IMR-90 (cell line): ENCODE measurements at regions of chr4 and their contacts with region 1.

Region 1: DNA sequence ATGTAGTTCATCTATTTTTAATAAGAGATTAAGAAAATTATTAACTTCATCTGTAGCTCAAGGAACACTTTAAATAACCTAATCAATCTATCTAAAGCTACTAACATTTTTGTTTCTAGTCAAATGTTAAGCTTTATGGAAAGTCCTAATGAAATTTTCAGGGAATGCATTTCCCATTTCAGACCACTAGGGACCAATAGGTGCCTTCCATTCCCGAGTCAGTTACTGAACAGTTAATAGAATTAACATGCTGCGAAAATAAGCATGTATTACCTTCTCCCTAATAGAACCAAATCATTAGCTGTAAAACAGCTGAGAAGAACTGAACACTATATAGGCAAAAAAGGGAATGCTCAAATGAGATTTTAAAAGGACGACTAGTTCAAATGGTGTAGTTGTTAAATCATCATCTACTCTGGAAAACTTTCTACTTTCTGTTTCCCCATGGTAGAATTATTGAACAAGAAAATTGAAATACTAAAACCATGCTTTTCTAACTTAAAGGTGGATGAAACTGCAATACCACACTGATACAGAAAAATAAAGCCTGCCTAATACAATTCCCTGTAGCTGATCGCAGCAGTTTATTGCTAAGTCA is 22.5 kb downstream of the STX18 start:
- DNase-seq: peak; percentile 33
- ATAC-seq: peak; percentile 72; the same call in 1 of the 2 replicates
- H3K4me3 ChIP-seq: no peak overlapping the region
- H3K27ac ChIP-seq: no peak overlapping the region
- H3K4me1 ChIP-seq: no peaks in the 10 kb centered on the region
- H3K27me3 ChIP-seq: no peaks in the 10 kb centered on the region
- CTCF ChIP-seq: peak; percentile 59
- POLR2A ChIP-seq: no peak
- RAD21 ChIP-seq: peak; percentile 51

Region 2: GRCh38 chr4:4541661-4542570 is 22.5 kb after region 1 on chr4 and contains the start of gene STX18:
- CTCF ChIA-PET with region 1: interaction called, 12 read pairs
- POLR2A ChIA-PET with region 1: no interaction called
- dilution Hi-C with region 1: no loop called
- in situ Hi-C with region 1: no loop called
- intact Hi-C with region 1: no loop called
- DNase-seq: peak; percentile 83
- ATAC-seq: peak; percentile 99
- H3K4me3 ChIP-seq: peak within 1 kb of the TSS; percentile 66
- H3K27ac ChIP-seq: peak within 1 kb of the TSS; percentile 74
- H3K4me1 ChIP-seq: no peaks in the 10 kb centered on the region
- H3K27me3 ChIP-seq: no peaks in the 10 kb centered on the region
- CTCF ChIP-seq: no peak
- POLR2A ChIP-seq: peak; percentile 84
- RAD21 ChIP-seq: peak; percentile 38
- total RNA-seq, gene STX18: 20.1 and 26.9 TPM in 2 replicates

Region 3: DNA sequence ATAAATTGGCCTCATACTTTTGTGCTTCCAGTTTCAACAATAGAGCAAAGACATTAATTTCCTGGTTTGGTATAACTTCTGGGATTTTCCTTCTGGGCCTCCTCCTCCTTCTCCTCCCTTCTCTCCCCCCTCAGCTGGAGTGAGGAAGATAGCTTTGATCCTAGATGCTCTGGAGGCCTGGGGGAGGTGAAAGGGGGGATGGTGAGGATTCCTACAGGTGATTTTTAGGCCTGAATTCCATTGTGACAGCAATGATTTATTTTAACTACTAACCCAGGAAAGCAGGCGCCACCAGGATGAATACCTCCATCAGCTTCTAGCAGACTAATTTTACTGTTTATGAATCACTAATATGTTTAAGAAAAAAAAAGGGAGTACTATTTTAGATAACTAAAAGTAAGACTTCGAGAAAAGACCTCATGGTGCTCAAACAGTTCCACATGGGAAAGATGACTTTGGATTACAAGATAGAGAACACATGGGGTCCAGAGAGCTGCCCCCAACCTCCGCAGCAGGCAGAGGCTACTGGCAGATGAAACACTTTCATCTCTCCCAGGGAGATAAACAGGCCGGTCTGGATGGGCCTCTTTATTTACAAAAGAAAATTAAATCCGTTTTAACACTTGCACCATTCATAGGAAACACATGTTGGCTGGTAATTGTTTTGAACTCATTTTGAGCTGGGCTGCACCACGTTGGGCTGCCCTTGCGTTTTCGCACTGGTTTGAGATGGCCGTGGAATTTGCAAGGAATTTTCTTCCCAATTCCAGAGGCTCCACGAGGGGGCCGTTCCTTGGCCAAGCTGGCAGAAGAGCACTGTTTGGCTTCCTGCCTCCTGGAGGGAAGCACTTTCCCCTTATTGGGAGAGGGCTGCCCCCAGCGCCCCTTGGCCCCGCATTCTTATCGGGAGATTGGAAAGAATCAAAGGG is 147.6 kb after region 1 on chr4:
- CTCF ChIA-PET with region 1: interaction called, 15 read pairs
- POLR2A ChIA-PET with region 1: no interaction called
- dilution Hi-C with region 1: no loop called
- in situ Hi-C with region 1: no loop called
- intact Hi-C with region 1: no loop called
- DNase-seq: no peak
- ATAC-seq: peak; percentile 63
- H3K4me3 ChIP-seq: no peak overlapping the region
- H3K27ac ChIP-seq: no peak overlapping the region
- H3K4me1 ChIP-seq: peaks cover 12% of the 10 kb centered on the region
- H3K27me3 ChIP-seq: no peaks in the 10 kb centered on the region
- CTCF ChIP-seq: no peak
- POLR2A ChIP-seq: no peak
- RAD21 ChIP-seq: no peak

Region 4: DNA sequence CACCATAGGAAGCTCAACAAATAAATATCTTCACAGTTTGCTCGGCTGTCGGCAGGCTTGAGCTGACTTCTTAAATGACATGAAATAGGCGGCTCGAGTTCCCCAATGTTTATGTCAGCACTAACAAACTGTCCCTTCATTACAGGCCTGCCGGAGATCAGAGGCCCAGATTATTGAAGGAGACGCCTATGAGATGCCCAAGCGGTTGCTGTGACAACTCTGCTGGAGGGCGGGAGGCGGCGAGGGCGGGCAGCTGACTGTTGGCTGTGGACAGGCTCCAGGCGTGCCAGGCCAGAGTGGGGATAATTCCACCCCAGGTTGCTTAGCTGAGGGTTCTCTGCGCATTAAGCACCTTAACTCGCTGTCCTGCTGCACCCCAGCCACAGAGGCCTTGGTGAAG is 300.9 kb after region 1 on chr4:
- CTCF ChIA-PET with region 1: no interaction called
- POLR2A ChIA-PET with region 1: no interaction called
- dilution Hi-C with region 1: no loop called
- in situ Hi-C with region 1: no loop called
- intact Hi-C with region 1: no loop called
- DNase-seq: no peak
- ATAC-seq: no peak
- H3K4me3 ChIP-seq: no peak overlapping the region
- H3K27ac ChIP-seq: no peak overlapping the region
- H3K4me1 ChIP-seq: no peaks in the 10 kb centered on the region
- H3K27me3 ChIP-seq: peaks cover 24% of the 10 kb centered on the region
- CTCF ChIP-seq: no peak
- POLR2A ChIP-seq: no peak
- RAD21 ChIP-seq: no peak